CD8-positive, alpha-beta T cell (primary cell): ENCODE measurements at regions of chr1 and their contacts with region 1.

Region 1: DNA sequence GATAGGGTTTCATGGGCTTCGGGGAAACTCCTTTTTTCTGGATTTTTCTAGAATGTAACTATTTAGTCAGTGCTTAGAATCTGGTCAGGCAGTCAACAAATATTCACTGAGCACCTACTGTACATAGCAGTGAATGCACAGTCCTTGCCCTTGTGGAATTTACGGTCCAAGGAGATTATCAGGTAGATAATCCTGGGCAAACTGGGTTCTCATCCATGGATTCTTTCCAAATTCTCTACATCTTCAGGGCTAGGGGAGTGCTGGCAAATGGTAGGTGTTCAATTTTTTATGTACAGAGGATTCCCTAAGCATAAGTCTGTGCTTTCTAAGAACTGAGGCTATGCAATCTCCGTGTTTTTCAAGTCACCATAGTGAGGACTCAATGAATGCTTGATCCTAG is 140.7 kb upstream of the CD34 start:
- DNase-seq: no peak
- ATAC-seq: no peak
- H3K4me3 ChIP-seq: no peak overlapping the region
- H3K4me3 Mint-ChIP-seq: no peak overlapping the region
- H3K27ac ChIP-seq: no peak overlapping the region
- H3K27ac Mint-ChIP-seq: no peak overlapping the region
- H3K4me1 ChIP-seq: no peaks in the 10 kb centered on the region
- H3K4me1 Mint-ChIP-seq: no peaks in the 10 kb centered on the region
- H3K27me3 ChIP-seq: no peaks in the 10 kb centered on the region
- H3K27me3 Mint-ChIP-seq: no peaks in the 10 kb centered on the region
- CTCF ChIP-seq: no peak

Region 2: GRCh38 chr1:207787776-207788175 is 263.9 kb before region 1 on chr1:
- CTCF ChIA-PET with region 1: no interaction called
- POLR2A ChIA-PET with region 1: no interaction called
- intact Hi-C with region 1: no loop called
- DNase-seq: no peak
- ATAC-seq: no peak
- H3K4me3 ChIP-seq: no peak overlapping the region
- H3K4me3 Mint-ChIP-seq: no peak overlapping the region
- H3K27ac ChIP-seq: no peak overlapping the region
- H3K27ac Mint-ChIP-seq: no peak overlapping the region
- H3K4me1 ChIP-seq: no peaks in the 10 kb centered on the region
- H3K4me1 Mint-ChIP-seq: no peaks in the 10 kb centered on the region
- H3K27me3 ChIP-seq: no peaks in the 10 kb centered on the region
- H3K27me3 Mint-ChIP-seq: no peaks in the 10 kb centered on the region
- CTCF ChIP-seq: no peak

Region 3: DNA sequence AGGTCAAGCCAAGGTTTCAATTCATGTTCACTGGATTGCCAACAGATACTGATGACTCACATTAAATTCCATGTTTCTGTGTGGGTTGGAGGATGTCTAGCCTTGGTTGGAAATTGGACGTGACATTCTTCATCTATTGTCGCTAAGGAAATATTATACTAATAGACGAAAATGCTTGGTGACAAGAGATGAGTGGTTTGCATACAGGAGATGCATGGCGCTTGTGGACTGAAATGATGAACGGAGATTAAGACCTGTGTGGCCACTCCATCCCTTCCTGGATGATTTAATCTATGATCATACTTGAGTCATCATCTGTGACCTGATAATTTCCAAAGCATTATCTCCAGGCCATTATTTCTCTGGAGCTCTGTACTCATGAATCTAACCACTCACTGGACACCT is 43.7 kb before region 1 on chr1:
- CTCF ChIA-PET with region 1: no interaction called
- POLR2A ChIA-PET with region 1: no interaction called
- intact Hi-C with region 1: no loop called
- DNase-seq: no peak
- ATAC-seq: no peak
- H3K4me3 ChIP-seq: no peak overlapping the region
- H3K4me3 Mint-ChIP-seq: no peak overlapping the region
- H3K27ac ChIP-seq: no peak overlapping the region
- H3K27ac Mint-ChIP-seq: no peak overlapping the region
- H3K4me1 ChIP-seq: no peaks in the 10 kb centered on the region
- H3K4me1 Mint-ChIP-seq: no peaks in the 10 kb centered on the region
- H3K27me3 ChIP-seq: no peaks in the 10 kb centered on the region
- H3K27me3 Mint-ChIP-seq: peaks cover under 1% of the 10 kb centered on the region
- CTCF ChIP-seq: no peak

Region 4: DNA sequence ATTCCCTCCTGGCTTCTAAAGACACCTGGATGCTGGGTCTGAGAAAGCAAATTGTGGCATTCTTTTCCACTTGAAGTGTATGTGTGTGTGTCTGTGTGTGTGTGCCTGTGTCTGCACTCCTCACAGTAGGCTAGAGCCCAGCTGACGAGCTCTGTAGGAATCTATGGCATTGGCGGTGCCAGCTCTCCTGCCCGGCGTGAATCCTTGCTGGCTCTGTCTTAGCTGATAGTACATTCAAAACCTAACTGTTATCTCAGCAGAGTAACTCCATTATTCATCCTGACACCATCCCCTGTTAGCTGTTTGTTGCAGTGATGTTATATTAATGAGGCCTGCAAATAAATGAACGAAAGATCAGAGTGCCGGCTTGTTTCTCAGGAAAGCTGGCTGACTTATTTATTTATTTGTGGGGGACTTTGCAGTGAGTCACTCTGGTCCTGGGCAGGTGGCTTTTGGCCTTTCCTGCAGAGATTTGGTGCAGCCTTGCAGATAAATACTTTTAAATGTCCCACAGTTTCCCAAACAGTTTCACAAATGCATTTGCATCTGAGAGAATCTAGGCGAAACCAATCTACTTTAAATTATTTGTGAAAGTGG is 19.9 kb after region 1 on chr1:
- CTCF ChIA-PET with region 1: interaction called, 3 read pairs
- POLR2A ChIA-PET with region 1: interaction called, 3 read pairs
- intact Hi-C with region 1: loop called in 1 of 2 experiments (anchors 2 kb)
- DNase-seq: no peak
- ATAC-seq: no peak
- H3K4me3 ChIP-seq: no peak overlapping the region
- H3K4me3 Mint-ChIP-seq: no peak overlapping the region
- H3K27ac ChIP-seq: no peak overlapping the region
- H3K27ac Mint-ChIP-seq: no peak overlapping the region
- H3K4me1 ChIP-seq: no peaks in the 10 kb centered on the region
- H3K4me1 Mint-ChIP-seq: no peaks in the 10 kb centered on the region
- H3K27me3 ChIP-seq: no peaks in the 10 kb centered on the region
- H3K27me3 Mint-ChIP-seq: peaks cover 4% of the 10 kb centered on the region
- CTCF ChIP-seq: no peak